ENCODE measurements at regions of chr1 and their contacts with region 1.

Region 1: DNA sequence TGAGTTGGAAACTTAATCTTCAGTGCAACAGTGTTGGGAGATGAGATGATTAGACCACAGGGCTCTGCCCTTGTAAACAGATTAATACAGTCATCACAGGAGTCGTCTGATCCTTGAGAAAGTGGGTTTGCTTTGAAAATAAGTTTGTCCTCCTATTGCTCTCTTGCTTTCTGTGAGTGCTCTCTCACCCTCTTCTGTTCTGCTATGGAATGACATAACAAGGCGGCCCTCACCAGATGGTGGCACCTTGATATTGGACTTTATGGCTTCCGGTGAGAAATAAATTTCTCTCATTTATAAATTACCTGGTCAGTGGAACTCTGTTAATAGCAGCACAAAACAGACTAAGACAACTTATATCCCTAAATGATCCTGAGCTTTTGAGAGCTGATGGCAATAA is 353.6 kb downstream of the BRINP3 start:
- DNase-seq: no peak
- ATAC-seq: no peak

Region 2: GRCh38 chr1:190138266-190138665 is 14.2 kb after region 1 on chr1:
- intact Hi-C with region 1: loop called (anchors 2 kb)
- DNase-seq: no peak
- ATAC-seq: no peak